ENCODE measurements at regions of chr11 and their contacts with region 1.

Region 1: GRCh38 chr11:121464352-121464946 is 11.7 kb upstream of the SORL1-AS1 start:
- DNase-seq: peak; percentile 53 to 86 (median 61)
- H3K4me3 ChIP-seq: peak overlapping the region; percentile 9
- H3K4me3 Mint-ChIP-seq: peak overlapping the region; percentile 64 to 89 (median 77)
- H3K27ac ChIP-seq: peak overlapping the region; percentile 39
- H3K27ac Mint-ChIP-seq: peak overlapping the region; percentile 92 to 98 (median 94)
- H3K4me1 ChIP-seq: peaks cover 99% of the 10 kb centered on the region
- H3K4me1 Mint-ChIP-seq: peaks cover 96 to 99% (median 97%) of the 10 kb centered on the region in 3 donors
- H3K27me3 ChIP-seq: no peaks in the 10 kb centered on the region
- H3K27me3 Mint-ChIP-seq: no peaks in the 10 kb centered on the region

Region 2: DNA sequence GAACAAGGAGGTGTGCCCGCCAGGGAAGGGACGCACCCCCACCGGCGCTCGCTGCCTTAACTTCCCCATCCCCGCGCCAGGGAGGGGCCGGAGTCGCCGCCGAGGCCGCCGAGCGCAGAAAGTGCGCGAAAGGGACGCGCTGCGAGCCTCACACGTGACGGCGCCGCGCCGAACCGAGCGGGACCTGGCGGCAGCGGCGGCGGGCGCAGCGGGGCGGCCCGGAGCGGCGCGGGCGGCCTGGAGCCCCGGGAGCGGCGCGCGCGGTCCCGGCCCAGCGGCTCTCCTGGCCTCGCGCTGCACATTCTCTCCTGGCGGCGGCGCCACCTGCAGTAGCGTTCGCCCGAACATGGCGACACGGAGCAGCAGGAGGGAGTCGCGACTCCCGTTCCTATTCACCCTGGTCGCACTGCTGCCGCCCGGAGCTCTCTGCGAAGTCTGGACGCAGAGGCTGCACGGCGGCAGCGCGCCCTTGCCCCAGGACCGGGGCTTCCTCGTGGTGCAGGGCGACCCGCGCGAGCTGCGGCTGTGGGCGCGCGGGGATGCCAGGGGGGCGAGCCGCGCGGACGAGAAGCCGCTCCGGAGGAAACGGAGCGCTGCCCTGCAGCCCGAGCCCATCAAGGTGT is 12.4 kb before region 1 on chr11 and contains the start of gene SORL1:
- CTCF ChIA-PET with region 1: interaction called, 52 read pairs
- POLR2A ChIA-PET with region 1: interaction called, 20 read pairs
- DNase-seq: peak; percentile 60 to 78 (median 63)
- H3K4me3 ChIP-seq: peak within 1 kb of the TSS; percentile 87
- H3K4me3 Mint-ChIP-seq: peak within 1 kb of the TSS; percentile 94 to 100 (median 97)
- H3K27ac ChIP-seq: peak within 1 kb of the TSS; percentile 71
- H3K27ac Mint-ChIP-seq: peak within 1 kb of the TSS; percentile 80 to 99 (median 98)
- H3K4me1 ChIP-seq: peaks cover 74% of the 10 kb centered on the region
- H3K4me1 Mint-ChIP-seq: peaks cover 81 to 89% (median 87%) of the 10 kb centered on the region in 3 donors
- H3K27me3 ChIP-seq: no peaks in the 10 kb centered on the region
- H3K27me3 Mint-ChIP-seq: no peaks in the 10 kb centered on the region
- total RNA-seq, gene SORL1: 44.5 to 46.9 TPM

Measured in CD8-positive, alpha-beta memory T cell (primary cell).